ENCODE measurements at regions of chr11 and their contacts with region 1.

Region 1: GRCh38 chr11:95156916-95157541 is 67.4 kb downstream of the ENDOD1 start:
- DNase-seq: no peak
- ATAC-seq: no peak
- H3K4me3 Mint-ChIP-seq: no peak overlapping the region
- H3K27ac Mint-ChIP-seq: no peak overlapping the region
- H3K4me1 Mint-ChIP-seq: peaks cover 16% of the 10 kb centered on the region
- H3K27me3 Mint-ChIP-seq: peaks cover 1% of the 10 kb centered on the region; the same call in 1 of the 2 replicates
- CTCF ChIP-seq: no peak

Region 2: DNA sequence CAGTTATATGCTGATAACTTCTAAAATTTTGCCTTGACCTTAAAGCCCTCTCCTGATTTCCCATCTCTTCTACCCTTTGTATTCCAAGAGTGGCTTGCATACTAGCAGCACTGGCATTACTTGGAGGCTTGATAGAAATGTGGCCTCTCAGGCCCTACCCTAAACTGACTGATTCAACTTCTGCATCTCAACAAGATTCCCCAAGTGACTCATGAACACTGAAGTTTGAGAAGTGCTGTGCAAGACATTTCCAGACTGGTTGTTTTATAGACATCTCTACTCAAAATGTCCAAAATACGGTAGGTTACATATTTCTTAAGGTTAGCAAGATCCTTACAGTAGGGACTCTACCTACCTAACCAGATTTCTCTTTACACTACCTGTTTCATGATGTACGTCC is 25.4 kb after region 1 on chr11:
- CTCF ChIA-PET with region 1: no interaction called
- POLR2A ChIA-PET with region 1: no interaction called
- DNase-seq: no peak
- ATAC-seq: no peak
- H3K4me3 Mint-ChIP-seq: no peak overlapping the region
- H3K27ac Mint-ChIP-seq: no peak overlapping the region
- H3K4me1 Mint-ChIP-seq: no peaks in the 10 kb centered on the region
- H3K27me3 Mint-ChIP-seq: no peaks in the 10 kb centered on the region
- CTCF ChIP-seq: no peak

Region 3: DNA sequence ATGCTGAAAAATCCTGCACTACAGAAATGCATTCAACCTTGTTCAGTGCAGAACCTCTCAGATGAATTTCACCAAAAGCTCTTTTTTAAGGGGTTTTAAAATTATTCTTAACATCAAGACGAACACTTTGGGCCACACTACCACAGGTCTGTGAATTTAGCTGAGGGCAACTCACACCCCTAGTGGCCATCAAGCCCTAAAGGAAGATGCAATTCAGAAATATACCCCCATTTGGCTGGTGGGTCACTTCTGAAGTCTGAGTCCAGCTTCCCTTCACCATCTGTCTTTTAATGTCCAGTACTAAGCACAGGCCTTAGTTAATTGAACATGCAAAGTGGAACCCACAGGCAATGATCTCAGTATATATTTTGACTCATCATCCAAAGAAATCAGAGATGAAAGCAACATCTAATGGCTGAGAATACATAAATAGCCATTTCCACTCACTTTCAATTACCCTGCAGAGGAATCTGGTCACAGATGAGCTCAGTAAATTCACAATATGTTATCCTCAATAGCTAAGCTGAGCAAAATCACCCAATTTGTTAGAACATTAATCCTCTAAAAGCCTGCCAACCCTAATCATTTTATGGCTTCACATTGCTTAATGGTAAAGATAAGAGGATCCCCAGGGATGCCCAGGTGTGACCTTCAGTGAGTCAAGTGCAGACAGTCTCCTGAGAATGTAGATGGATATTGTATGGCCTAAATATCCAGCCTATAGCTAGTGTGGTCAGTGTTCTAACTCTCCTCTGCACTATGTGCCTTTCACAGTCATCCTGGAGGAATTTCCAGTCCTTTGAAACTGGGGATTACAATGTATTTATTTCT is 582.3 kb after region 1 on chr11:
- CTCF ChIA-PET with region 1: interaction called, 13 read pairs
- POLR2A ChIA-PET with region 1: no interaction called
- DNase-seq: no peak
- ATAC-seq: peak; percentile 65; the same call in 1 of the 2 replicates
- H3K4me3 Mint-ChIP-seq: no peak overlapping the region
- H3K27ac Mint-ChIP-seq: no peak overlapping the region
- H3K4me1 Mint-ChIP-seq: no peaks in the 10 kb centered on the region
- H3K27me3 Mint-ChIP-seq: no peaks in the 10 kb centered on the region
- CTCF ChIP-seq: no peak